Mammary epithelial cell (primary cell): ENCODE measurements at regions of chr7 and their contacts with region 1.

Region 1: GRCh38 chr7:101602484-101603241 is 26.4 kb downstream of the MYL10 start:
- DNase-seq: peak; percentile 55
- H3K4me3 ChIP-seq: no peak overlapping the region
- H3K27ac ChIP-seq: no peak overlapping the region
- H3K4me1 ChIP-seq: peaks cover 12% of the 10 kb centered on the region
- H3K27me3 ChIP-seq: no peaks in the 10 kb centered on the region
- CTCF ChIP-seq: peak; percentile 65 to 97

Region 2: GRCh38 chr7:101165075-101165957 is 437.3 kb before region 1 on chr7 and contains the start of gene VGF:
- CTCF ChIA-PET with region 1: no interaction called
- dilution Hi-C with region 1: no loop called
- in situ Hi-C with region 1: no loop called
- intact Hi-C with region 1: no loop called
- DNase-seq: peak; percentile 91
- H3K4me3 ChIP-seq: peak within 1 kb of the TSS; percentile 18 to 49 (median 47)
- H3K27ac ChIP-seq: no peak within 1 kb of the TSS
- H3K4me1 ChIP-seq: peaks cover 48% of the 10 kb centered on the region
- H3K27me3 ChIP-seq: peaks cover 7% of the 10 kb centered on the region
- CTCF ChIP-seq: no peak
- total RNA-seq, gene VGF: 0.54 TPM in 1 of 2 donors, not detected in the other

Region 3: DNA sequence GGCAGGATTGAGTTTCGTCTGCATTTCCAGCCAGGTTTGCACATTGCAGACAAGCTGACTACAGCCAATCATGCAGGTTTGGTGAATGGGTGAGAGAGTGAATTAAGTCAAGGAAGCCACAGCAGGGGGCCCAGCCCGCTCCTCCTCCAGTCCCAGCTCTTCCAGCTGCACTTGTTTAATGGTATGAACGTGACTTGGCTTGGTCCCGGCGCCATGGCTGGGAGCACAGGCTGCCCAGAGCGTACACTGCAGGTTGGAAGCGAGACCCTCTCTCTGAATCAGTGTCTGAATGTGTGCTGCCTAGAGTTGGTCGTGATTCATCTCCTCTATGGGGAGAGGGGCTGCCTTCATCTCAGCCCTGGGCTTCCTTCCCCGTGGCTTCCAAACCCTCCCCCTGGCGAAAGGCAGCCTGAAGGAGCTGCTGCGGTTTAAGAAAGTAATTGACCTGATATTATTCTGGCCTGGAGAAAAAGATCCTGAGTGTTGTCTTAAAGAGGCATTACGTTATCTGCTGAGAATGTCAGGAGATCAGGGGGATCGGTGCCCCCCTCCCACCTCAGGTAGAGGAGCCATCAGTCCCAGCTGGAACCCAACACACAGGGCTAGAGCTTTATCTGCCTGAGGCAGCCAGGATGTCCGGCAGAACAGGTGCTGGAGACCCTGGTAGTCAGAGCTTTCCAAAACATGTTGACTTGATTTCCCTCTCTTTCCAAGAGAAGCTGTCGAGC is 107.9 kb before region 1 on chr7:
- CTCF ChIA-PET with region 1: no interaction called
- dilution Hi-C with region 1: loop called (anchors 5 kb)
- in situ Hi-C with region 1: no loop called
- intact Hi-C with region 1: no loop called
- DNase-seq: no peak
- H3K4me3 ChIP-seq: no peak overlapping the region
- H3K27ac ChIP-seq: no peak overlapping the region
- H3K4me1 ChIP-seq: no peaks in the 10 kb centered on the region
- H3K27me3 ChIP-seq: no peaks in the 10 kb centered on the region
- CTCF ChIP-seq: no peak

Region 4: DNA sequence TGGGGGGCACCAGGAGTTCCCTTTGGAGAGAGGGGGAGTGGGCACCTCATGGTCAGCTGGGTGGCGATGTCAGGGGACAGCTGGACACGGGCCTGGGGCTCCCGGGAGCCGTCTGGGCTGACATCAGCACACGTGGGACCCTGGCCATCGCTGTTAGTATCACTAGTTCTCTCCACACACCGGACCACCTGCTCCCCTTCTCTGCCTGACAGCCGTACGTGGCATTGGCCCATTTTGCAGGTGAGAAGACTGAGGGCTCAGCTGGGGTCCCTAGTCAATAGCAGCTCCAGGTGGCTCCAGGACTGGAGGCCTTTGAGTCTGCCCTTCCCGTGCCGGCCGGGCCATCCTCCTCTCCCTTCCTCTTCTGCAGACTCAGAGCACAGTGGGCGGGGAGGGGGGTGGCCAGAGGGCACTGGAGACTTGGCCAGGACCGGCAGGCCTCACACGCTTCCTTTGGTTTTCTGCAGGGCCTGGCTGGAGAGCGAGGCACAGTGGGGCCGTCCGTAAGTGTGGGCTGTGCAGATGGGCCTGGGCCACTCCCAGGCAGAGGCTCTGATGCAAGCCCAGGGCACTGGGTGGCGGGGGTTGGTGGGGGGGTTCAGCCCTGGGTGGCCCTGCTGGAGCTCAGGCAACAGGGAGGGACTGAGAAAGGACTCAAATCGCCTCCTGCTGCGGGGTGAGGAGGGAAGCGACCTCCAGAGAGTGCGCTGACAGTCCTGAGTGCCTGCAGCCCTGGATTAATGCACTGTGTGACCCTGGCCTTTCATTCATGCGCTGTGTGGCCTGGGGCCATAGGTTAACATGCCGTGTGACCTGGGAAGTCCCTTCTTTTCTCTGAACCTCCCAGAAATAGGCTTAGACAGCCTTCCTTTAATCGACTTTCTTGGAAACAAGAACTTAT is 51.8 kb before region 1 on chr7:
- CTCF ChIA-PET with region 1: no interaction called
- dilution Hi-C with region 1: loop called (anchors 5 kb)
- in situ Hi-C with region 1: no loop called
- intact Hi-C with region 1: no loop called
- DNase-seq: no peak
- H3K4me3 ChIP-seq: no peak overlapping the region
- H3K27ac ChIP-seq: no peak overlapping the region
- H3K4me1 ChIP-seq: no peaks in the 10 kb centered on the region
- H3K27me3 ChIP-seq: peaks cover 2% of the 10 kb centered on the region
- CTCF ChIP-seq: no peak

Region 5: GRCh38 chr7:101688183-101688831 is 85.6 kb after region 1 on chr7:
- CTCF ChIA-PET with region 1: no interaction called
- dilution Hi-C with region 1: loop called (anchors 5 kb)
- in situ Hi-C with region 1: no loop called
- intact Hi-C with region 1: loop called (anchors 2 kb)
- DNase-seq: peak; percentile 34
- H3K4me3 ChIP-seq: peak overlapping the region in 2 of 3 experiments; percentile 34 to 35
- H3K27ac ChIP-seq: no peak overlapping the region
- H3K4me1 ChIP-seq: peaks cover 6% of the 10 kb centered on the region
- H3K27me3 ChIP-seq: no peaks in the 10 kb centered on the region
- CTCF ChIP-seq: peak; percentile 53 to 92

Region 6: DNA sequence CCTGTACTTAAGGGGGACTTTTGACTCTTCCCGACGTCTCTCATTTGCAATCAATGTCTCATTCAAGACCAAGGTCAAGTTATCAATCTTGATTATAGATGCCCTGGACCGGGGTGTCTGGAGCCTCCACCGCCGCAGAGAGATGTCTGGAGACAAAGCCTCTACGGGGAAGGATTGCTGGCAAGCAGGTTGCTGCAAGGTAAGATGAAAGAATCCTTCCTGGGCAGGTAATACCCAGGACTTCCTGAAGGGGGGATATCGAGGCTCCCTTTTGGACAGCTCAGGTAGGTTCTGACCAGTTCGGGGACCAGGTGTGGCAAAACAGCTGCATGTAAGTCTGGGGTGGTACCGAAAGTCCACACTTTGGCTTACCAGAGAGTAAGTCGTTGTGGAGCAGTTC is 202.3 kb after region 1 on chr7:
- CTCF ChIA-PET with region 1: no interaction called
- dilution Hi-C with region 1: no loop called
- in situ Hi-C with region 1: loop called in 1 of 2 experiments (anchors 25 kb)
- intact Hi-C with region 1: loop called (anchors 2 kb)
- DNase-seq: peak; percentile 32
- H3K4me3 ChIP-seq: no peak overlapping the region
- H3K27ac ChIP-seq: no peak overlapping the region
- H3K4me1 ChIP-seq: peaks cover 12% of the 10 kb centered on the region
- H3K27me3 ChIP-seq: no peaks in the 10 kb centered on the region
- CTCF ChIP-seq: peak; percentile 66

Region 7: DNA sequence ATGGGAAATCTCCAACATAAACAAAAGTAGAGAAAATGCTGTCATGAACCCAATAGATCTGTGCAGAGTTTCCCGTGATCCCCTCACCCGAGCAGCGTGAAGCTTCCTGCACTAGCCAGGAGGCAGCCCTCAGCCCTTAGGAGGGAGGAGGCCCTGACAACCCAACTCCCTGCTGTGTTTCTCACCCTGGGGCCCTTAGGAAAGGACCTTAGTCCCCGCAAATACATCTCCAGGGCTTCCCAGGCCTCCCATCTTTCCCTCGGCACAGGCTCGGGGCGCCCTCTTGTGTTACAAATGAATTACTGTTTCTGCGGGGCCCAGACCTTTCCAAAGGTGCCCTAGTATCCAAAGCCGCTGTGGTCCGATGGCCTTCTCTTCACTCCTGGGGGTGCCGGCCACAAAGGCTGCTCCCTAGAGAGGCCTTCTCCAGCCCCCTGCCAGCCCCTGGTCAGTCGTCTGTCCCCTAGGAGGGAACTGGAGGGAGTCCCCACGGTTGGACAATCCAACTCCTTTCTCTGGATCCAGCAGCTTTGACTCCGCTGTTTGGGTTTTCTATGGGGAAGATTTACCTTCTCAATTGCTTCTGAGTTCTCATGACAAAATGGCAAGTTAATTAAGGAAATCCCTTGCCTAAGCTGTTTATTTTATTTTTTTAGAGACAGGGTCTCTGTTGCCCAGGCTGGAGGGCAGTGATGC is 634.1 kb after region 1 on chr7:
- CTCF ChIA-PET with region 1: no interaction called
- dilution Hi-C with region 1: no loop called
- in situ Hi-C with region 1: loop called in 1 of 2 experiments (anchors 10 kb)
- intact Hi-C with region 1: loop called (anchors 1 kb)
- DNase-seq: peak; percentile 44
- H3K4me3 ChIP-seq: no peak overlapping the region
- H3K27ac ChIP-seq: no peak overlapping the region
- H3K4me1 ChIP-seq: no peaks in the 10 kb centered on the region
- H3K27me3 ChIP-seq: no peaks in the 10 kb centered on the region
- CTCF ChIP-seq: peak; percentile 78 to 87

Region 8: DNA sequence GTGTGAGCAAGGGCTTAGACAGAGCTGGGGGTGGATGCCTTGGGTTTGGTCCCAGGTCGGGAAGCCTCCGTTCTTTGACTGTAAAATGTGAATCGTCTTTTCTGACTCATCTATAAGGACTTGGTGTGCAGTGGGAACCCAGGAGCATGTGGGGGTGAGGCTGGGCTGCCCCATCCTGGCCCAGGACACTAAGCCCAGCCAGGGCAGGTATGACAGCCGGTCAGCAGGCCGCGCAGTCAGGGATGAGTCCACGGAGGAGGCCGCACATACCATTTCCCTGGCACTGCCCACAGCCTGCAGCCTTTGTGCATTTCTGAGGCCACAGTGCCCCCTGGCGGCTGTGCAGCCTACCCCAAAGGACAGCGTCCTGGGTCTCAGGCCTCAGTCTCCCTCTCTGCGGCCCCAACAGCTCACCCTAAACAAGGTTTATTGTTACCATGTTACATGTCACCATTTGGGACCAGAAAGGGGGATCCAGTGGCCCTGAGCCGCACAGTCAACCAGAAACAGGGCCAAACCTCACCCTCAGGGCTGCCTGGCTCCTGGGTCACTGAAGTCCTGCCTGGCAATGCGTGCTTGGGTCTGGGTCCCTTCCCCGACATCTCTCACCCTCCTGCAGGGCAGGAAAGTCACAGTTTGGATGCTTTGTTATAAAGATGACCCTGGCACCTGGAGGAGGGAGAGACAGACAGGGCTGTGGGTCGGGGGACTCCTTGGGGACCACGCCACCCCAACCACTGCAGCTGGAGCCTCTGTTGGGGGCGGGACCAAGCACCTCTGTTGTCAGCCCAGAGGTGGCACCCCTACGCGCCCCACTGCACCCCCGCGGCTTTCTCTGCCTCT is 669.6 kb after region 1 on chr7:
- CTCF ChIA-PET with region 1: no interaction called
- dilution Hi-C with region 1: no loop called
- in situ Hi-C with region 1: no loop called
- intact Hi-C with region 1: loop called (anchors 1 kb)
- DNase-seq: peak; percentile 66
- H3K4me3 ChIP-seq: no peak overlapping the region
- H3K27ac ChIP-seq: no peak overlapping the region
- H3K4me1 ChIP-seq: peaks cover 5% of the 10 kb centered on the region
- H3K27me3 ChIP-seq: no peaks in the 10 kb centered on the region
- CTCF ChIP-seq: peak; percentile 91 to 95